ENCODE measurements at regions of chr11 and their contacts with region 1.

Region 1: DNA sequence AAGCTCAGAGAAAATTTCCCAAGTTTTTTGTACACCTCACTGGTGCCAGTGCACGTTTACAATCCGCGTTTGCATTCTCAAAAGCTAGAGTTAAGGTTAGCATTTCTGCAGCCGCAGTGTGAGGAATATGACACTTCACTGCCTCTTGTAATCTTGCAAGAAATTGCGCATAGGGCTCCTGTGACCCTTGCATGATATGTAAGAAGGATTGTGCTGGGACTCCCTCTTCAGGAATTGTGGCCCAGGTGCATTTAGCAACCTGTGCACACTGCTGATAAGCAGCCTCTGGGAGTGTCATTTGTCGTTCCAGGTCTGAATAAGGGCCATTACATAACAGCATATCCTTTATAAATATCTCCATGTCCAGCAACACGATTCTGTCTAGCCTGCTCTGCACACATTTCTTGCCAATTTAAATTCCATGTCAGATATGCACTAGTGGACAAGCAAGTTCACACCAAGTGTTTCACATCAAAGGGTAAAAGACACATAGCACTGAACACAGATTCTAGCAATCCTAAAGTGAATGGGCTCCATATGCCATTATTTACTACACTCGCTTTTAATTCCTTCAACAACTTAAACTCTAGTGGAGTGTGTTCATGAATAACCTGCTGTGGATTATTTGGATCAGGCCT is 69.2 kb upstream of the INCENP start:
- ATAC-seq: peak in 7 of 8 experiments; percentile 42 to 67 (median 48)
- H3K4me3 ChIP-seq: no peak overlapping the region
- H3K27ac ChIP-seq: no peak overlapping the region
- H3K4me1 ChIP-seq: no peaks in the 10 kb centered on the region

Region 2: GRCh38 chr11:61718621-61719302 is 335.8 kb before region 1 on chr11:
- in situ Hi-C with region 1: no loop called
- ATAC-seq: peak; percentile 51 to 97 (median 95)
- H3K4me3 ChIP-seq: peak overlapping the region; percentile 18 to 32 (median 28)
- H3K27ac ChIP-seq: peak overlapping the region; percentile 22 to 36
- H3K4me1 ChIP-seq: peaks cover 21% of the 10 kb centered on the region in 2 donors

Region 3: GRCh38 chr11:61967116-61967923 is 87.3 kb before region 1 on chr11 and contains the start of gene FTH1:
- in situ Hi-C with region 1: loop called in 1 of 9 experiments (anchors 25 kb)
- ATAC-seq: peak; percentile 25 to 84 (median 77)
- H3K4me3 ChIP-seq: peak within 1 kb of the TSS; percentile 76 to 99 (median 96)
- H3K27ac ChIP-seq: peak within 1 kb of the TSS; percentile 94 to 96
- H3K4me1 ChIP-seq: peaks cover 26 to 28% of the 10 kb centered on the region in 2 donors
- total RNA-seq, gene FTH1: 863 to 2,225 (median 1,257) TPM